Activated CD4-positive, alpha-beta memory T cell treated with anti-CD3 and anti-CD28 coated beads, Interleukin-2, amount 10 ng/mL, durations not matched to agents 7 days and 5 days (primary cell): ENCODE measurements at regions of chr7 and their contacts with region 1.

Region 1: GRCh38 chr7:12211054-12211710 is at the start of gene TMEM106B:
- DNase-seq: peak; percentile 98
- H3K4me3 Mint-ChIP-seq: peak within 1 kb of the TSS; percentile 79
- H3K27ac Mint-ChIP-seq: peak within 1 kb of the TSS; percentile 97
- H3K4me1 Mint-ChIP-seq: peaks cover 26% of the 10 kb centered on the region
- H3K27me3 Mint-ChIP-seq: peaks cover 10% of the 10 kb centered on the region
- total RNA-seq, gene TMEM106B: 29.0 to 31.2 TPM

Region 2: DNA sequence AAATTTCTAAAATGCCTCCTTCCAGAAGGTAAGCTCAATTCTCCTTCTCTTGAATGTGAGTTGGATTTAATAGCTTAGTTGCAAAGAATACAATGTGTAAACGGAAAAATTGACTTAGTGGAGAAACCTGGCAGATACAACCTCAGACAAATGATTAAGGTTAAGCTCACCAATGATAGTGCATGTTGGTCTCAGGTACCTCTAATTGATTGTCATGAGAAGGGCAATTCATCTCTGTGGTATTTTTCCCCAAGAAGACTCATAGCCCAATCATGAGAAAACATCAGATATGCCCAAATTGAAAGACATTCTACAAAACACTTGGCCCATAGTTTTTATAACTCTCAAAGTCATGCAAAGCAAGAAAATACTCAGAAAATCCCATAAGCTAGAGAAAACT is 36.3 kb before region 1 on chr7:
- CTCF ChIA-PET with region 1: interaction called, 5 read pairs
- POLR2A ChIA-PET with region 1: interaction called, 23 read pairs
- DNase-seq: no peak
- H3K4me3 Mint-ChIP-seq: no peak overlapping the region
- H3K27ac Mint-ChIP-seq: no peak overlapping the region
- H3K4me1 Mint-ChIP-seq: peaks cover 18% of the 10 kb centered on the region
- H3K27me3 Mint-ChIP-seq: no peaks in the 10 kb centered on the region

Region 3: DNA sequence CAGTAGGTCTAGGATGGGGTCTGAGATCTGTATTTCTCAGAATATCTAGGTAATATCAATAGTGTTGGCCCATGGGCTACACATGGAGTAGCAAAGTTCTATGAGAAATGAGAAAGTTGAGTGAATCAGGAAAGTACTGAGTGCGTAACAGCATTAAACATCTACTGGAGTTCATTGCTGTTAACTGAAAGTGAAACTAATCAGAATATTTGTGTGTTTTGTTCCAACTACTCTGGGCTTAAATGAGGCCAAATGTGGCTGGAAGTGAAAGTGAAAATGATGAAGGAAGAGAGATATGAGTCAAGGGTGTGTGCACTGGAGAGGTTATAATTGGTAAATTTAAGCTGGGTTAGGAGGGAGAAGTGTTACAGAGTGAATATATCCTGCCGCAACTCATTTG is 46.4 kb after region 1 on chr7:
- CTCF ChIA-PET with region 1: interaction called, 5 read pairs
- POLR2A ChIA-PET with region 1: interaction called, 35 read pairs
- DNase-seq: peak; percentile 36
- H3K4me3 Mint-ChIP-seq: no peak overlapping the region
- H3K27ac Mint-ChIP-seq: no peak overlapping the region
- H3K4me1 Mint-ChIP-seq: peaks cover 6% of the 10 kb centered on the region
- H3K27me3 Mint-ChIP-seq: peaks cover 5% of the 10 kb centered on the region